ENCODE measurements at regions of chr12 and their contacts with region 1.

Region 1: GRCh38 chr12:118183705-118184104 is 47.8 kb downstream of the PEBP1 start:
- DNase-seq: no peak
- H3K4me3 ChIP-seq: no peak overlapping the region
- H3K27ac ChIP-seq: no peak overlapping the region
- H3K4me1 ChIP-seq: peaks cover 0 to 4% of the 10 kb centered on the region in 2 donors
- H3K27me3 ChIP-seq: no peaks in the 10 kb centered on the region
- CTCF ChIP-seq: no peak
- POLR2A ChIP-seq: no peak

Region 2: DNA sequence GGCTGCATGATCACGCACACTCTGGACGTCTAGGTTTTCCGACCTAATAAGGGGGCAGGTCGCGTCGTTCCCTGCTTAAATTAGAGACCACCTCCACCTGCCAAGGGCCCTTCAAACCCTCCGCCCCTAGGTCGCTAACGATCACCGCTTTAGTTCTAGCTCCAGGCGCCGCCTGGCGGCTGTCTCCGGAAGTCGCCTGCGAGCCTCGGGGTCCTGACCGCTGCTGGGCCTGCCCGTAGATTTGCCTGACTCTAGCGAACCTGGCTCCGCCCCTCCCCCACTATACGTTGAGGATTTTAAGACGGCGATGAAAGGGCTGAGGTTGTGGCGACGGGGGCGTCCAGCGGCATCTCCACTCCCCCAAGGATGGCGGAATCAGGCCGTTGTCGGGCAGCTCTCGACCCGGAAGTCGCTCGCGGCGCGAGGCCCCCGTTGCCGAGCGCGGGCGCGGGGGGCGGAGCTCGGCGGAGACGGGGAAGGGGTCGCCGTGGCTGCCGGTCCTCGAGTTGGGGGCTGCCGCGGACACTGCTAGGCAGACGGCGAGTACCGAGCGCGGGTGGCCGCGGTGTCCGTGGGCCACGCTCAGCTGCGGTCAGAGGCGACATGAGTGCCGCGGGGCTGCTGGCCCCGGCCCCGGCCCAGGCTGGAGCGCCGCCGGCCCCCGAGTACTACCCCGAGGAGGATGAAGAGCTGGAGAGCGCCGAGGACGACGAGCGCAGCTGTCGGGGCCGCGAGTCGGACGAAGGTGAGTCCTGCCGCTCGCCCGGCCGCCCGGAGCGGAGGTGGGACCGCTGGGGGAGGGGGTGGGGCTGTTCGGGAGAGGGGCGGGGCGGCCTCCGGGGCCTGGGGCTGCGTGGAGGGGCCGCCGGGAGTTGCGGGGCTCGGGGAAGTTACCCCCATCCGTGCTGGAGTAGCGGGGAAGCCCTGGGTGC is 192.7 kb after region 1 on chr12 and contains the start of gene SUDS3:
- intact Hi-C with region 1: loop called (anchors 5 kb)
- DNase-seq: peak; percentile 92 to 93
- H3K4me3 ChIP-seq: peak within 1 kb of the TSS; percentile 61 to 93 (median 89)
- H3K27ac ChIP-seq: peak within 1 kb of the TSS; percentile 95 to 97 (median 97)
- H3K4me1 ChIP-seq: peaks cover 14 to 23% of the 10 kb centered on the region in 2 donors
- H3K27me3 ChIP-seq: no peaks in the 10 kb centered on the region
- CTCF ChIP-seq: peak; percentile 94 to 99 (median 97)
- POLR2A ChIP-seq: peak in 1 of 2 donors; percentile 76
- total RNA-seq, gene SUDS3: 56.5 to 75.7 (median 62.7) TPM

Measured in thyroid gland (tissue), 4 donors.